SK-N-SH (cell line): ENCODE measurements at regions of chr11 and their contacts with region 1.

Region 1: GRCh38 chr11:79440441-79441194 is at the start of gene TENM4:
- DNase-seq: peak; percentile 86
- H3K4me3 ChIP-seq: peak within 1 kb of the TSS; percentile 91 to 92
- H3K27ac ChIP-seq: peak within 1 kb of the TSS; percentile 76 to 91
- H3K4me1 ChIP-seq: peaks cover 9 to 22% of the 10 kb centered on the region in 2 experiments; a peak in 2 of 4 replicates
- H3K27me3 ChIP-seq: no peaks in the 10 kb centered on the region
- CTCF ChIP-seq: peak; percentile 63
- EP300 ChIP-seq: no peak
- RAD21 ChIP-seq: peak; percentile 36; the same call in 1 of the 2 replicates
- polyA plus RNA-seq, gene TENM4: 6.0 and 16.7 TPM in 2 replicates

Region 2: GRCh38 chr11:79219191-79219590 is 221.4 kb before region 1 on chr11:
- CTCF ChIA-PET with region 1: no interaction called
- POLR2A ChIA-PET with region 1: no interaction called
- DNase-seq: no peak
- H3K4me3 ChIP-seq: no peak overlapping the region
- H3K27ac ChIP-seq: no peak overlapping the region
- H3K4me1 ChIP-seq: peaks cover 0 to 5% of the 10 kb centered on the region in 2 experiments; a peak in 1 of 4 replicates
- H3K27me3 ChIP-seq: no peaks in the 10 kb centered on the region
- CTCF ChIP-seq: no peak
- EP300 ChIP-seq: no peak
- RAD21 ChIP-seq: no peak

Region 3: DNA sequence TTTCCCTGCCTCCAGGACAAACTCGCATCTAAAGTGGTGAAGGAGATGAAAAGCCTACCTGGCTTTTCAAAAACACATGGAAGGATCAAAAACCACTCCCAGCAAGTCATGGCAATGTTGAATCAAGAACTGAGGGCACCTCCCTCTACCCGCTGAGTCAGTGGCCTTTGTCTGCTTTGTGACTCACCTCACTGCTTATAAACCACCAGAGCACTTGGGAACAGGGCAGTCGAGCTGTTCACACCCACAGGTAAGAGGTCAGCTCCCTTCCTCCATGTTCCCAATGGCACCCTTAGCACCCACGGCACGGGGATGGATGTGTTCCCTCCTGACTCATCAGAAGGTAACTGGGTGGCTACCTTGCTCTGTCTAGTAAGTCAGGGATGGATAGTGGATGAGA is 21.5 kb before region 1 on chr11:
- CTCF ChIA-PET with region 1: interaction called, 21 read pairs
- POLR2A ChIA-PET with region 1: no interaction called
- DNase-seq: no peak
- H3K4me3 ChIP-seq: no peak overlapping the region
- H3K27ac ChIP-seq: peak overlapping the region in 1 of 2 experiments; percentile 61; a peak in 2 of 4 replicates
- H3K4me1 ChIP-seq: peaks cover 8 to 28% of the 10 kb centered on the region in 2 experiments; a peak in 3 of 4 replicates
- H3K27me3 ChIP-seq: no peaks in the 10 kb centered on the region
- CTCF ChIP-seq: no peak
- EP300 ChIP-seq: no peak
- RAD21 ChIP-seq: no peak

Region 4: GRCh38 chr11:79461144-79461543 is 20.5 kb after region 1 on chr11:
- CTCF ChIA-PET with region 1: interaction called, 10 read pairs
- POLR2A ChIA-PET with region 1: interaction called, 3 read pairs
- DNase-seq: peak; percentile 18
- H3K4me3 ChIP-seq: no peak overlapping the region; a peak in 1 of 4 replicates
- H3K27ac ChIP-seq: no peak overlapping the region
- H3K4me1 ChIP-seq: no peaks in the 10 kb centered on the region
- H3K27me3 ChIP-seq: no peaks in the 10 kb centered on the region
- CTCF ChIP-seq: peak; percentile 78
- EP300 ChIP-seq: no peak
- RAD21 ChIP-seq: peak; percentile 68

Region 5: DNA sequence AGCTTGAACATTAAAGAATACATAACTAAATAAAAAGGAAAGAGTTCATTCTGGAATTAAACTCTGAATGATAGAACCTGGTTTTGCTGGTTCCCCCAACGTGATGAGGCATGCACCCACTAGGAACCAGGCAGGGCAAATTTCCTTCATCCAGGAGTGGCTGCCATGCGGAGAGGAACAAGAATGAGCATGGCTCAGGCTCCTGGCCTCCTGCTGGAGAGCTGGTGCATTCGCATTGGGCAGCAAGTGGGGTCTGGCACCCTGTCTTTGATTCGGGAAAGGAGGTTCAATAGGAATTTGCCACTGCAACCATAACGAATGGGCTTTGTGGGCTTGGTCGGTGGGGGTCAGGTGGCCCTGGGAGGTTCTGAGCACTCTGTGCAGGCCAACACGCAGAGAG is 170.1 kb after region 1 on chr11:
- CTCF ChIA-PET with region 1: no interaction called
- POLR2A ChIA-PET with region 1: no interaction called
- DNase-seq: no peak
- H3K4me3 ChIP-seq: no peak overlapping the region
- H3K27ac ChIP-seq: no peak overlapping the region
- H3K4me1 ChIP-seq: no peaks in the 10 kb centered on the region
- H3K27me3 ChIP-seq: no peaks in the 10 kb centered on the region; the same call in 1 of the 2 replicates
- CTCF ChIP-seq: peak; percentile 21
- EP300 ChIP-seq: no peak
- RAD21 ChIP-seq: 0 out of 2 replicates have a peak, but pooled peaks have one; percentile 9